Activated naive CD4-positive, alpha-beta T cell treated with anti-CD3 and anti-CD28 coated beads for 36 hours (primary cell): ENCODE measurements at regions of chr6 and their contacts with region 1.

Region 1: DNA sequence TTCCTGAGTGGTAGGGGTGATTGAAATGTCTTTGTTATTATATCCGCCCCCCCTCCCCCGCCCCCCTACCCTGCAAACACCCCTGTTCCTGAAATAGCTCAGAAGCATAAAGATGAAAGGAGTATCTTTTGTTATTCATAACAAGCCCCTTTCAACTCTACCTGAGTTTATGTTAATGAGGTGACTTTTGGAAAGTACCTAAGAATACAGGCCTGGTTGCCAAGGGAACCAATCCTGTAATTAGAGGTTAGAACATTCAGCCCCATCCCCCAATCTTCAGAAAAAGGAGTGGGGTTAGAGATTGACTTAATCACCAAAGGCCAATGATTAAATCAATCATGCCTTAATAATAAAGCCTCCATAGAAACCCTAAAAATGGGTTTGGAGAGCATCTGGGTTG is 979.2 kb upstream of the GJE1 start:
- DNase-seq: peak; percentile 66
- H3K4me3 Mint-ChIP-seq: no peak overlapping the region
- H3K27ac Mint-ChIP-seq: peak overlapping the region; percentile 56
- H3K4me1 Mint-ChIP-seq: peaks cover 24% of the 10 kb centered on the region
- H3K27me3 Mint-ChIP-seq: no peaks in the 10 kb centered on the region

Region 2: GRCh38 chr6:141218583-141218982 is 65.0 kb after region 1 on chr6:
- CTCF ChIA-PET with region 1: no interaction called
- intact Hi-C with region 1: no loop called
- DNase-seq: no peak
- H3K4me3 Mint-ChIP-seq: no peak overlapping the region
- H3K27ac Mint-ChIP-seq: no peak overlapping the region
- H3K4me1 Mint-ChIP-seq: peaks cover 6% of the 10 kb centered on the region
- H3K27me3 Mint-ChIP-seq: peaks cover 2% of the 10 kb centered on the region

Region 3: GRCh38 chr6:141309295-141309694 is 155.7 kb after region 1 on chr6:
- CTCF ChIA-PET with region 1: no interaction called
- intact Hi-C with region 1: loop called (anchors 1 kb)
- DNase-seq: peak; percentile 7
- H3K4me3 Mint-ChIP-seq: no peak overlapping the region
- H3K27ac Mint-ChIP-seq: no peak overlapping the region
- H3K4me1 Mint-ChIP-seq: peaks cover 11% of the 10 kb centered on the region
- H3K27me3 Mint-ChIP-seq: no peaks in the 10 kb centered on the region

Region 4: GRCh38 chr6:141326426-141326825 is 172.9 kb after region 1 on chr6:
- CTCF ChIA-PET with region 1: no interaction called
- intact Hi-C with region 1: loop called (anchors 5 kb)
- DNase-seq: peak; percentile 80
- H3K4me3 Mint-ChIP-seq: no peak overlapping the region
- H3K27ac Mint-ChIP-seq: no peak overlapping the region
- H3K4me1 Mint-ChIP-seq: peaks cover 15% of the 10 kb centered on the region
- H3K27me3 Mint-ChIP-seq: no peaks in the 10 kb centered on the region

Region 5: DNA sequence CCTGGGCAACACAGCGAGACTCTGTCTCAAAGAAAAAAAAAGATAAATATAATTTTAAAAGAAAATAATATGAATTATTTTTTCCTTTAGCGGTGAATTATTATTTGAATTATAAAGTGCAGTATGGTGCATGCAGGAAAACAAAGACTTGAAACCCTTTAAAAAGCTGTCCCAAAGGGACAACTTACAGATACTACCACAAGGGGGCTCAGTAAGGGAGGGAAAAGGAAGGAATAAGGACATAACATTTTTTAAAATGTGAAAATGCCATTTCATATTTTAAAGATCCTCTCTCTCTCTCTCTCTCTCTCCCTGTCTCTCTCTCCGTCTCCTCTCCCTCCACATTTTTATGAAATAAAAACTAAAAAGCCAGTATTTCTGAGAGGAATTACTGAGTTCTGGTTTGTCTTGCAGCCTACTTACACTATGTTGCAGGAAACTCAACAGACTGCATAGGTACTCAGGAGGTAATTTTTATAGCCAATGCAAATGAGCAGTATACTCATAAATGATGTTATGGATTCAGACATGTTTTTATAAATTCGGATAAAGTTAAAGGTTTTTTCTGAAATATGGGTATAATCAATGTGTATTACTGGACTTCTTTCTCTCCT is 524.1 kb after region 1 on chr6:
- CTCF ChIA-PET with region 1: no interaction called
- intact Hi-C with region 1: no loop called
- DNase-seq: no peak
- H3K4me3 Mint-ChIP-seq: no peak overlapping the region
- H3K27ac Mint-ChIP-seq: no peak overlapping the region
- H3K4me1 Mint-ChIP-seq: no peaks in the 10 kb centered on the region
- H3K27me3 Mint-ChIP-seq: no peaks in the 10 kb centered on the region